ENCODE measurements at regions of chr5 and their contacts with region 1.

Region 1: GRCh38 chr5:181184857-181185251 is 20.1 kb downstream of the TRIM7 start:
- DNase-seq: no peak
- H3K4me3 Mint-ChIP-seq: peak overlapping the region; percentile 83
- H3K27ac Mint-ChIP-seq: peak overlapping the region; percentile 94
- H3K4me1 Mint-ChIP-seq: peaks cover 55% of the 10 kb centered on the region
- H3K27me3 Mint-ChIP-seq: peaks cover 44% of the 10 kb centered on the region

Region 2: GRCh38 chr5:180970875-180971274 is 214.0 kb before region 1 on chr5:
- CTCF ChIA-PET with region 1: no interaction called
- DNase-seq: no peak
- H3K4me3 Mint-ChIP-seq: no peak overlapping the region
- H3K27ac Mint-ChIP-seq: no peak overlapping the region
- H3K4me1 Mint-ChIP-seq: no peaks in the 10 kb centered on the region
- H3K27me3 Mint-ChIP-seq: no peaks in the 10 kb centered on the region

Region 3: DNA sequence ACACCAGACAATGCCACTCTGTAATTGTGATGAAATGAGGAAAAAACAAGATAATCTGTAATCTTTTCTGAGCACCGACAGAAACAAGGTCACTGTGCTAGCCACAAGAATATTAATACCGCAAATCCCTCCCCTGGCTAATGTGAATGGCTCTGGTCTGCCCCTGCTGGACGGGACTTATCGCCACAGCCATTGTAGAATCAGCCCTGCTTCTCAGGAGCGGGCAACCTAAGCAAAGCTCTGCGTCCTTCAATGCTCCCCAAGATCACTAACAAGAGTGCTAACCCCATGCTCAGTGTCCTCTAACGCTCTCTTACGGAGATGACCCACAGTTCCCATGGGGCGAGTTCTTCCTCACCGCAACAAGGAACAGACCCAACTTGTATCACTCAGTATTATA is 96.6 kb before region 1 on chr5:
- CTCF ChIA-PET with region 1: no interaction called
- DNase-seq: no peak
- H3K4me3 Mint-ChIP-seq: no peak overlapping the region
- H3K27ac Mint-ChIP-seq: no peak overlapping the region
- H3K4me1 Mint-ChIP-seq: no peaks in the 10 kb centered on the region
- H3K27me3 Mint-ChIP-seq: peaks cover 37% of the 10 kb centered on the region

Region 4: GRCh38 chr5:181133610-181134231 is 51.1 kb before region 1 on chr5:
- CTCF ChIA-PET with region 1: no interaction called
- DNase-seq: no peak
- H3K4me3 Mint-ChIP-seq: no peak overlapping the region
- H3K27ac Mint-ChIP-seq: no peak overlapping the region
- H3K4me1 Mint-ChIP-seq: no peaks in the 10 kb centered on the region
- H3K27me3 Mint-ChIP-seq: peaks cover 40% of the 10 kb centered on the region

Region 5: DNA sequence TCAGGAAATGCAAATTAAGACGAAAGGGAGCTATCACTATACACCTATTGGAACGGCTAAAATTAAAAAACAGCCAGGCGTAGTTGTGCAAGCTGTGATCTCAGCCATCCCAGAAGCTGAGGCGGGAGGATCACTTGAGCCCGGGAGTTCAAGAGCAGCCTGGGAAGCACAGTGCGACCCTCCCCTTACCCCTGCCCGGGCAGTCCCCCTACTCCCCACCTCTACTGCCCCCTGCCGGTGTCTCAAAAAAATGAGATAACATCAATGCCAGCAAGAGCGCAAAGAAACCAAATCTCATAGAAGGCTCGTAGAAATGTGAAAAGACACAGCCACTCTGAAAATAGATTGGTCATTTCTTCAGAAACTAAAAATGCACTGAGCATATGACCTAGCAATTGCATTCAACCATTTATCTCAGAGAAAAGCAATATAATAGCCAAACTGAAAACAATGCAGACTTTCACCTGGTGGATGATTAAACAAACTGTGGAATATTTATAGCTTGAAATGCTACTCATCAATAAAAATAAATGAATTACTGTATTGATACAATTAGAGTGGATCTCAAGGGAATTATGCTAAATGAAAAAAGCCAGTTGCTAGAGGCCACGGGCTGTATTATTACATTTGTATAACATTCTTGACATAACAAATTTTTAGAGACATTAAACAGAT is 16.9 kb before region 1 on chr5:
- CTCF ChIA-PET with region 1: interaction called, 10 read pairs
- DNase-seq: peak; percentile 45
- H3K4me3 Mint-ChIP-seq: no peak overlapping the region
- H3K27ac Mint-ChIP-seq: no peak overlapping the region
- H3K4me1 Mint-ChIP-seq: peaks cover 81% of the 10 kb centered on the region
- H3K27me3 Mint-ChIP-seq: peaks cover 94% of the 10 kb centered on the region

Region 6: DNA sequence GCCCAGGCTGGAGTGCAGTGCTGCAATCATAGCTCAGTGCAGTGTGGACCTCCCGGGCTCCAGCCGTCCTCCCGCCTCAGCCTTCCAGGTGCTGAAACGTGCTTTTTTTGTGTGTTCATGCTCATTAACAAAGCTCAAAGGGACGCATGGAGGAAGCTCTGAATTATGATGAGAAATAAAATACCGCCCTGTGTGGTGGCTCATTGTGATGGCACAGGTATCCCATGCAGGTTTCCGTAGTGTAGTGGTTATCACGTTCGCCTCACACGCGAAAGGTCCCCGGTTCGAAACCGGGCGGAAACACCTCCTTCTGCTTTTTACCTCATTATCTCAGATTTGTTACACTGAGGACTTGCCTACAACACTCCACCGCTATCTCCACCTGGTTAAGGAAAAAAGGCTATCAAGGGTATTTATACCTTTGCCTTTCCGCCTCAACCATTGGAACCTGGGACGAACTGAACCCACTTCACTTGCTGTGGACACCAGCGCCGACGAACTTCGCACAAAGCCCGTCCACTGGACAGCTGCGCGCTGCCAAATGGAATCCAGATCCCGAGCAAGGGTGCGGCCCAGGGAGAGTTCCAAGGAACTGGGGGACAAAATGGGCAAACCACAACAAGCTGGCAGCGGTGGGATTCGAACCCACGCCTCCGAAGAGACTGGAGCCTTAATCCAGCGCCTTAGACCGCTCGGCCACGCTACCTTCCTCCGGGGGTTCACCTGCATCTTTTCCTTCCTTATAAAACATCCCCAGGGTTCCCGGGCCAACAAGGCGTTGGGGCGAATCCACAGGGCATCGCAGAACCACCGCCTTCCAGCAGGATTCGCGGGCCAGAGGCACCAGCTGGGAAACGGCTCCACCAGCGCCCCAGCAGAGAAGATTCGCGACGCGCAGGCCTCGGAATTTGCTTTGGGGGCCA is 11.2 kb before region 1 on chr5:
- CTCF ChIA-PET with region 1: interaction called, 10 read pairs
- DNase-seq: peak; percentile 71
- H3K4me3 Mint-ChIP-seq: peak overlapping the region; percentile 77
- H3K27ac Mint-ChIP-seq: peak overlapping the region; percentile 91
- H3K4me1 Mint-ChIP-seq: peaks cover 47% of the 10 kb centered on the region
- H3K27me3 Mint-ChIP-seq: peaks cover 73% of the 10 kb centered on the region

Measured in activated naive CD4-positive, alpha-beta T cell treated with anti-CD3 and anti-CD28 coated beads, Interleukin-2, amount 10 ng/mL, durations not matched to agents 7 days and 5 days (primary cell).